Activated CD8-positive, alpha-beta T cell treated with anti-CD3 and anti-CD28 coated beads, Interleukin-2, amount 10 ng/mL, durations not matched to agents 7 days and 5 days (primary cell): ENCODE measurements at regions of chr2 and their contacts with region 1.

Region 1: DNA sequence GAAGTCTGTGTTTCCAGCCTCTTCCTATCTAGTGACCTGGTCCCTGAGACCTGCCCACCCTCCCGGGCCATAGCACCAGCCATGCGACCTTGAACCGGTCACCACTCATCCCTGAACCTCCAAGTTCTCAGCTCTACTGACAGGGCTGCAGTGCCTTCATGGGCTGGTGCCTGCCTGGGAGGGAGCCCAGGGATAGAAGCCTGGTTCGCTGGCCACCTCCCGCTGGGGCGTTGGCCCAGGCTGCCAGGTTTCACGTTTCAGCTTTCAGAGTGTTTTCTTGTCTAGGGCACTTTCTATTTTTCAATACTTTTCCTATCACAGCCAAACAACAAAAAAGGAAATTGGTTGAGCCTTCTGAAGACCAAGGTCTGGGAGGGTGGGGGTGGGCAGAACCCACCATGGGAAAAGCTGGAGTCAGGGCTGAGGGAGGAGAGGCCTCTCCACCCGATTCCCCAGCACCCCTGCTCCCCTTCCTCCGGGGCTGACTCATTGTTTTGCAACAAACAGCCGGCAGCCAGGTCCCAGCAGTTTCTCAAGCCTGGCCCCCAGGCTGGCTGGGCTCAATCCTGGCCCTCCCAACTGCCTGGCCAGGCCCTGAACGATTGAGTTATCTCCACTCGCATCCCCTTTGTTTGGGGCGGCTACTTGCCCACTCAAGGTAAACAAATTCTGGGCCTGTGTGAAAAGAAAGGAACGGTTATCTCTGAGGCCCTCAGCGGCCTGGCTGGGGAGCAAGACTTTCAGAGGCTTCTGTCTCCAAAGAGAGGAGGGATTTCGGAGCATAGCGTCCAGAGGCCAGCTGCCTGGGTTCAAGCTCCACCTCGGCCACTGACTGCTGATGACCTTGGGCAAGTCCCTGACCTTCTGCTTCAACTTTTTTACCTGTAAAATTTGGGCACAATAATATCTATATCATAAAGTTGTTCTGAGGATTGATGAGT is 47.5 kb downstream of the ZFP36L2 start:
- DNase-seq: no peak
- ATAC-seq: no peak
- H3K4me3 Mint-ChIP-seq: no peak overlapping the region
- H3K27ac Mint-ChIP-seq: peak overlapping the region; percentile 67
- H3K4me1 Mint-ChIP-seq: peaks cover 54% of the 10 kb centered on the region
- H3K27me3 Mint-ChIP-seq: no peaks in the 10 kb centered on the region

Region 2: DNA sequence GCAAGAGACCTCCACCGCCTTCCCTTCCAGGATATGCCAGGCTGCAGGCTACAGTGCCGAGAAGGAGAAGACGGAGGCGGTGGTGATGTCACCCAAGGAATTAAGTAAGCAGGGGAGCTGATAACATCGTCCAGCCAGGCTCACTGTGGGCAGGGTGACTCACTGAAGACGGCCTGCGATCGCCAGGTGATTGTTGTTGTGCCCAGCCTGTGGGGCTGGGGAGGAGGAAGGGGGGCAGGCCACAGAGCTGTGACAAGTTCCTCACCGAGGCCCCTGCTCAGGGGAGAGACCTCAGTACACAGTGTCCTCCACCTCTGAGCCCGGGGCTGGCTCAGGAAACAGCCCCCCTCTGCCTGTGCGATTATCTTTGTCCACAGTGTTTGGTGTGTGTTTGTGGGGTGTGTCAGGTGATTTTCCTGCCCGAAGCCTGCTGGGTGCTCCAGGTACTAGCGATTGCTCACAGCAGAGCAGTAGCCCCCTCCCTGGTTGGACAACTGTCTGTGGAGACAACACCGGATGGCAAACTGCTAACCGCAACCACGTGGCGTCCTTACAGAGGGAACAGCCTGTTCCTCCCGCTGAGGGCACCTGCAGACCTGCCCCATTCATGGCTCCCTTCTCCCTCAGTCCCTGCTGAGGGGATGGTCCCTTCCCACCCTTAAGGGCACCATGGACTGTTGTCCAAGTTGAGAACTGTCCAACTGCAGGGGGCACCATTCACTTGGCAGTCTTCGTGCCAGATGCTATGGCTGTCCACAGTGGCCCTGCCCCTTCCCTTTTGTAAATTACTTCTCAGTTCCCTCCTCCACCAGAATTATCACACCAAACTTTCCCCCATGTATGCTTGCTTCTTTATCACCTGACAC is 47.6 kb before region 1 on chr2:
- CTCF ChIA-PET with region 1: interaction called, 242 read pairs
- POLR2A ChIA-PET with region 1: interaction called, 6 read pairs
- DNase-seq: peak; percentile 94
- ATAC-seq: peak; percentile 40
- H3K4me3 Mint-ChIP-seq: peak overlapping the region; percentile 59
- H3K27ac Mint-ChIP-seq: peak overlapping the region; percentile 100
- H3K4me1 Mint-ChIP-seq: peaks cover 91% of the 10 kb centered on the region
- H3K27me3 Mint-ChIP-seq: no peaks in the 10 kb centered on the region

Region 3: DNA sequence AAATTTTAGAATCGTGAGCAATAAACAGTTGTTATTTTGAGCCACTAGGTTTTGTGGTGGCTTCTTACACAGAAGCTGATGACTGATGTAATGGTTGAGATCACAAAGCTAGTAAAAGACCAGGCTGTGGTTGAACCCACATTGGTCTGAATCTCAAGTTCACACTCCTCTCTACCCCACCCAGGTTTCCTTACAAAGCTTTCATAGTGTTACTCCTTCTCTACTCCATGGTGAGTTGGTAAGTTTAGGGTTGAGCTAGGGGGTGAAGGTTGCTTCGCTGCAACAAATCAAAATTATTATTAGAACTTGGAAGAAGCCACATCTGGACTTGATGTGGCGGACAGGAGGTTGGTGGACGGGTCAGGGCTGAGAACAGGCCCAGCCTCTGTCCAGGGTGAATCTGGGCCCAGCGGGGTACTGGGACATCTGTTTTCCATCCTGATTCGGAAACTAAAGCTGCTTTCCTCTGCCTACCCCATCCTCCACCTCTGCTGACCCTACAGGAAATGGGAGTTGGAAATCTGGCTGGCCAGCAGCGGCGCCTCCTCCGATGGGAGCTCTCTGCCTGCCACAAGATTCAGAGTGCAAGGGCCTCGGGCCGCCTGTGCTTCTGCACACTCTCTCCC is 38.8 kb before region 1 on chr2:
- CTCF ChIA-PET with region 1: interaction called, 242 read pairs
- POLR2A ChIA-PET with region 1: interaction called, 13 read pairs
- DNase-seq: peak; percentile 81
- ATAC-seq: peak; percentile 51
- H3K4me3 Mint-ChIP-seq: peak overlapping the region; percentile 52
- H3K27ac Mint-ChIP-seq: peak overlapping the region; percentile 91
- H3K4me1 Mint-ChIP-seq: peaks cover 79% of the 10 kb centered on the region
- H3K27me3 Mint-ChIP-seq: no peaks in the 10 kb centered on the region

Region 4: DNA sequence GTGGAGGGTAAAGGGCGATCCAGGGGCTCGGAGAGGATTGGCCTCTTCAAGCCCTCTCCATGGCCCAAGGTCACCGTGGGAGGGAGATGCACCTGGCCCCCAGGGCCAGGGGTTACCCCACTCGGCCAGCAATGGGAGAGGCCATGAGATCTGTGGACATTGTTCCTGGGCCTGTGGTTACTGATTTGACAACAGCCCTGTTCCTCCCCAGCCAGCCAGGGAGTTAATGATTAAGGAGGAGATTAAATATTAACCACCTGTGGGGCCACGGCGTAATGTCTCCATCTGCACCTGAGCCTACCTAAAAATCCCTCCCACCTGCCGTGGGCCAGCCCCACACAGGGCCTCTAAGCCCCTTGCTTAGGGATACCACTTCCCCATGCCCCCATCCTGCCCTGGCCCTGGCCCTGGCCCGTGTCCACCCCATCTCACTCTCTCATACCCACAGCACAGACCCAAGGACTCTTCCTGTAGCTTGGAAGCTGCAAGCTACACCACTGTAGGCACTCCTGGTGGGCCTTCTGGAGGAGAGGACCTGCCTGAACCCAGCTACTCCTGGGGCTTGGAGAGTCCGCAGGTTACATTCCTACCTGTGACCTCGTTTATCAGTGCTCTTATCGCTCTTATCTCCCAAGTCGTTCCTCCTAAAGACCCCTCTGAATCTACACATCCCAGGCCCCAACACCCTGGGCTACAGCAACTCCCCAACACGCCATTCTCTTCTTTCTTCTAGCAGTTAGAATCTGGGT is 15.4 kb after region 1 on chr2:
- CTCF ChIA-PET with region 1: interaction called, 34 read pairs
- POLR2A ChIA-PET with region 1: interaction called, 15 read pairs
- DNase-seq: no peak
- ATAC-seq: peak; percentile 14
- H3K4me3 Mint-ChIP-seq: peak overlapping the region; percentile 77
- H3K27ac Mint-ChIP-seq: peak overlapping the region; percentile 94
- H3K4me1 Mint-ChIP-seq: peaks cover 65% of the 10 kb centered on the region
- H3K27me3 Mint-ChIP-seq: no peaks in the 10 kb centered on the region

Region 5: DNA sequence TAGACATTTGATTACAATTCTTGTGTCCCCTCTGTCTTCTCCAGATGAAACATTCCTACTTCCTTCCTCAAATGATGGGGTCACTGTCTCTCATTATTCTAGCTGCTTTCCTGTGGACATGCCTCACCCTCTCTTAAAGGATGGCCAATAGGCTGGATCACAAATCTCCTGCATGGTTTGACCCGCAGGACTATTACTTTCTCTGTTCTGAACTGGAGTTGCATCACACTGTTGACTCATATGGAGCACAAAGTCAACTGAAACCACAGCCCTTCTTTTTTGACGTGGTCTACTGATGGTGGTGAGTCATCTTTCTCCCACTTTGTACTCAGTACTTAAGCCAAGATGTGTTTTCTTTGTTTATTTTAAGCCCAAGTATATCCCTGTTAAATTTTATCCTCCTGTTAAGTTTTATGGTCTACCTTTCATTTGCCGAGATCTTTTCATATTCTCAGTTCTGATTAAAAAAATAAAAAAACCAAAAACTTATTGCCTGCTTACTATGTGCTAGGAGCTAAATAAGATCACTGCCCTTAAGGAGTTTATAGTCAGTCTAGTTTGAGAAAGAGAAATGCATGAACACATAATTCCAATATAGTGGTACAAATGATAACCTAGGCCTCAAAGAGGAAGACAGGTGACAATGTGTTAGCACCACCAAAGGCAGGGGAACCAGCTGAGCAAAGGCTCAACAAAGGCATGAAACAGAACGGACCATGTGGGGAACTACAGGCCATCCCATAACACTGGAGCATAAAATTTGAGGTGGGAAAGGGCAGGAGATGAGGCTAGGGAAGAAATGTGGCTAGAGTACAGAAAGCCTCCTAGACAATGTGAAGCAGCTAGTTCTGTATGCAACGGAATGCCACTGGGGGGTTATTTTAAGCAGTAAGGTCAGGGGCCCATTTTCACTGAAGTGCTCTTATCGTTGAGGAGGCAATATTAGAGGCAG is 115.1 kb after region 1 on chr2:
- CTCF ChIA-PET with region 1: no interaction called
- POLR2A ChIA-PET with region 1: no interaction called
- DNase-seq: peak; percentile 71
- ATAC-seq: peak; percentile 98
- H3K4me3 Mint-ChIP-seq: no peak overlapping the region
- H3K27ac Mint-ChIP-seq: peak overlapping the region; percentile 88
- H3K4me1 Mint-ChIP-seq: peaks cover 23% of the 10 kb centered on the region
- H3K27me3 Mint-ChIP-seq: no peaks in the 10 kb centered on the region